Prostate gland (tissue), 2 donors: ENCODE measurements at regions of chr6 and their contacts with region 1.

Region 1: GRCh38 chr6:84074988-84075781 is 41.6 kb downstream of the MRAP2 start:
- DNase-seq: no peak
- H3K4me3 ChIP-seq: no peak overlapping the region
- H3K27ac ChIP-seq: no peak overlapping the region
- H3K4me1 ChIP-seq: no peaks in the 10 kb centered on the region
- H3K27me3 ChIP-seq: no peaks in the 10 kb centered on the region
- CTCF ChIP-seq: no peak
- POLR2A ChIP-seq: no peak

Region 2: DNA sequence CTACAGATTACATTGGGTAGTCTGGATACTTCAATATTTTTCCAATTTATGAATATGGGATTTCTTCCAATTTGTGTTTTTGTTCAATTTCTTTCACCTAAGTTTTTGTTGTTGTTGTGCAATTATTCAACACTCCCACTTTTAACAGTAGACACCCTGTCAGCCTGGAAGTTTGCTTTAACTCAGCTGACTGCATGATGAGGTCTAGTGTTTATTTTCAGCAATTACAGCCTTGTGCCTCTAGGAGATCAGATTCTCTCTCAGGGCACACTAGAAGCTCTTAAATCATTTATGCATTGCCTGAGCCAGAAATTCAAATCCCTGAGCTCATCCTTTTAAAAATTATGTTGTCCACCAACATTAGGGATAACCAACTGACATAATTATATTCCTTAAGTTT is 44.1 kb after region 1 on chr6:
- intact Hi-C with region 1: loop called (anchors 5 kb)
- DNase-seq: no peak
- H3K4me3 ChIP-seq: no peak overlapping the region
- H3K27ac ChIP-seq: no peak overlapping the region
- H3K4me1 ChIP-seq: no peaks in the 10 kb centered on the region
- H3K27me3 ChIP-seq: no peaks in the 10 kb centered on the region
- CTCF ChIP-seq: no peak
- POLR2A ChIP-seq: no peak